Esophagus muscularis mucosa (tissue), 4 donors: ENCODE measurements at regions of chr12 and their contacts with region 1.

Region 1: DNA sequence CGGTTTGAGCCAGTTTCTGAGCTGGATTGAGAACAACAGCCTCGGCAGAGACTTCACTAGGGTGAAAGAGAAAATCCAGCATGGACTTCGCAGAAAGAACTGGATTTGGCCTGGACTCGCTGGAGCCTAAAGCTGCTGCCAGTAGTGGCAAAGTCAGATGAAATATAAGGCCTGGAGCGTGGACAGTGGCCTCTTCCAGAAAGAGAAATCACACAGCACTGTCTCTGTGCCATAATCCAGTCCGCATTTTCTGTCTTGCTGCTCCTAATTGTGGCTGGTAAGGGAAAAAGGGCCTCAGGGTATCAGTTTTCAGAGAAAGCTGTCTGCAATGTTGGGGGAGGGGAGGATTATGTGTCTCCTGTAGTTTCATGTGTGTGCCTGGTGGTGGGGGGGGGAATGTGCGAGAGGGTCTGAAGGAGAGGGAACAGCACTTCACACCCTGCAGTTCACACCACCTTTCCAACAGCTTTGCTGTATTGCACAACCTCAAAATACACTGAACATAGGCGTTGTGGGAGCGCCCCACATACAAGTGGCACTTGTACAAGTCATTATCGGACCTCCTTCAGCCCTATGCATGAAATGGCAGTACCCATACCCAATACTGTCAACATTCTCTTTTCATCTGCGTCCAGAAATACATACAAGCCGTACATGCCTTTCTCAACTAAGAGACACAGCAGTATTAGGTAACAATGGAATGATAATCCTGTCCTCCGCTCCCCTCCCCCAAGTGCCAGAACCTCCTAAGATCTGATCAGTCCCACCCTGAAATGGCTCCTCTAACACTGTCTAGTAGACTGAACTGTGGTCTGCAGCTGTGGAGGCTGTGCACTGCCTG is 107.5 kb upstream of the ATF7IP start:
- DNase-seq: peak; percentile 96
- H3K4me3 ChIP-seq: peak overlapping the region; percentile 3 to 32 (median 23)
- H3K27ac ChIP-seq: peak overlapping the region; percentile 82 to 87 (median 86)
- H3K4me1 ChIP-seq: peaks cover 42 to 62% (median 54%) of the 10 kb centered on the region in 4 donors
- H3K27me3 ChIP-seq: no peaks in the 10 kb centered on the region
- CTCF ChIP-seq: no peak
- EP300 ChIP-seq: no peak
- POLR2A ChIP-seq: peak; percentile 59

Region 2: DNA sequence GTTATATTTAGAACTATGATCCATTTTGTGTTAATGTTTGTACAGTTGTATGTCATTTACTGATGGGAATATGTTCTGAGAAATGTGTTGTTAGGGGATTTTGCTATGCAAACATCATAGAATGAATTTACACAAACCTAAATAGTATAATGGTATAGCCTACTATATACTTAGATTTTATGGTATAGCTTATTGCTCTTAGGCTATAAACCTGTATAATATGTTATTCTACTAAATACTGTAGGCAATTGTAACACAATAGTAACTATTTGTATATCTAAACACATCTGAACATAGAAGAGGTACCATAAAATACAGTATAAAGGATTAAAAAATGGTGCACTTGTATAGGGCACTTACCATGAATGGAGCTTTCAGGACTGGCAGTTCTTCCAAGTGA is 171.1 kb before region 1 on chr12:
- intact Hi-C with region 1: no loop called
- DNase-seq: no peak
- H3K4me3 ChIP-seq: no peak overlapping the region
- H3K27ac ChIP-seq: no peak overlapping the region
- H3K4me1 ChIP-seq: no peaks in the 10 kb centered on the region
- H3K27me3 ChIP-seq: no peaks in the 10 kb centered on the region
- CTCF ChIP-seq: no peak
- EP300 ChIP-seq: no peak
- POLR2A ChIP-seq: no peak

Region 3: DNA sequence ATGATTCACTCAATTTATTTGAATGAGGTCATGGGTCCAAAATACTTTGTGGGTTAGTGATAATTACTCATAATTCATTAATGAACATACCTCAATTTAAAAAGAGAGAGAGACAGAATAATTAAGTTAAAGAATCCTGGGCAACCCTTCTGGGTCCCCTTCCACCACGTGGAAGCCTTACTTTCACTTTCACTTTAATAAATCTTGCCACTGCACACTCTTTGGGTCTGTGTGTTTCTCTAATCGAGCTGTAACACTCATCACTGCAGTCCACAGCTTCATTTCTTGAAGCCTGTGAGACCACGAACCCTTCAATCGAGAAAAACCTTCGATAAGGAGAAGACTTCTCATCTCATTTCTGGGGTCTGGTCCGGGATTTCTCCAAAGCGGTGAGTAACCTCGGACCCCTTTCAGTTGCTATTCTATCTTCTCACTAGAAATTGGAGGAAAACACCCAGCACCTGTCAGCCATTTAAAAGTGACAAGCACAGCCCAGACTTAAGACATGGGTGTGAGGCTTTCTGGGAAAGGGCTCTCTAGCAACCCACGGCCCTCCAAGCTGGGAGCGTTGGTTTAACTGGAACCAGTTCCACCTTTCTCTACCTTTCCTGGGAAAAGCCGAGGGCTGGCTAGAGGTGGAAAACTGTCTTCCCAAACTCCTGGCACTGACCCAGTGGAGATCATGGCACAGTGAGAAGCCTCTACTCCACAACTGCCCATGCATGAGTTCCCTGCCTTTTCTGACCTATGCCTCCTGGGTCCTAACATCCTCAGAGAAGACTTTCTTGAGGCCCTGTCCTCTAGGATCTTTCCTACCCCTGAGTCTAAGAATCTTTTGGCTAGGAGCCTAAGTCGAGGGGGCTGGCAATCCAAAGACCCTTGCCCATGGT is 41.3 kb before region 1 on chr12:
- intact Hi-C with region 1: no loop called
- DNase-seq: no peak
- H3K4me3 ChIP-seq: peak overlapping the region in 3 of 4 donors; percentile 0 to 42 (median 28)
- H3K27ac ChIP-seq: no peak overlapping the region
- H3K4me1 ChIP-seq: peaks cover 0 to 5% (median 0%) of the 10 kb centered on the region in 4 donors
- H3K27me3 ChIP-seq: no peaks in the 10 kb centered on the region
- CTCF ChIP-seq: no peak
- EP300 ChIP-seq: no peak
- POLR2A ChIP-seq: no peak

Region 4: GRCh38 chr12:14417715-14418114 is 159.8 kb after region 1 on chr12:
- intact Hi-C with region 1: loop called (anchors 5 kb)
- DNase-seq: no peak
- H3K4me3 ChIP-seq: peak overlapping the region in 3 of 4 donors; percentile 27 to 34 (median 33)
- H3K27ac ChIP-seq: peak overlapping the region in 3 of 4 donors; percentile 6 to 22 (median 8)
- H3K4me1 ChIP-seq: peaks cover 39 to 70% (median 51%) of the 10 kb centered on the region in 4 donors
- H3K27me3 ChIP-seq: no peaks in the 10 kb centered on the region
- CTCF ChIP-seq: no peak
- EP300 ChIP-seq: no peak
- POLR2A ChIP-seq: no peak

Region 5: GRCh38 chr12:14454098-14454907 is 196.3 kb after region 1 on chr12:
- intact Hi-C with region 1: no loop called
- DNase-seq: no peak
- H3K4me3 ChIP-seq: no peak overlapping the region
- H3K27ac ChIP-seq: no peak overlapping the region
- H3K4me1 ChIP-seq: peaks cover 0 to 10% (median under 1%) of the 10 kb centered on the region in 4 donors
- H3K27me3 ChIP-seq: no peaks in the 10 kb centered on the region
- CTCF ChIP-seq: peak in 2 of 3 experiments; percentile 26 to 32
- EP300 ChIP-seq: no peak
- POLR2A ChIP-seq: no peak